HCT116 (cell line): ENCODE measurements at regions of chr1 and their contacts with region 1.

Region 1: DNA sequence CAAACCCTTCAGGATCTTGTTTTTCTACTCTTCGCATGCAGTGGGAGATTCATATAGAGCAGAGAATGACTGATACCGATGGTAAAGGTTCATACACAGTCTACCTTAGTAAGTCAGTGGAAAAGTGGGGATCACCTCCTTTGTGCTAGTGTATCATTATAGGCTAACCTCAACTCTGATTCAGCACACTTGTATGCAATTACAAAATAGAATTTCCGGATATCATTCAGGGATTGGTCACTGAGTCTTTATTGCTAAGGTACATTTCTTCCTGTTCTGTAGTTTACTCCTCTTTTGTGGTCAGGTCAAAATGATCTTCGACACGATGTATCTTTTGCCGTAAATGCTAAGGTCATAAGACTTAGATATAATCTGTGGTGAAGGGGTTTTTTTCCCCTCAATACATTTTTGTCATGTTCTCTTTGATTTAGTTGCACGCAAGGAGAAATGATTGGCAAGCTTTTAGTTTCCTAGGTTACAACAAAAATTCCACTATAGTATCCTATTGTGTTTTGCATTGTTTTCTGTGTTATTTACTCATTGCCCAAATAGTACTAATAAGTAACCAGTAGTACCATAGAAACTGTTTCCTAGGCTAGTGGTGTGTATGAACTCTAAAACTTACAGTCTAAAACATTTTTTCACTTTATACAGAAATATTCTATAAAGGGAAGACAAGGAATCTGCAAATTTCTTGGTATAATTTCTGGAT is 35.7 kb upstream of the PLA2G4A start:
- DNase-seq: no peak
- ATAC-seq: no peak
- H3K4me3 ChIP-seq: no peak overlapping the region
- H3K27ac ChIP-seq: no peak overlapping the region
- H3K4me1 ChIP-seq: no peaks in the 10 kb centered on the region
- H3K27me3 ChIP-seq: no peaks in the 10 kb centered on the region
- CTCF ChIP-seq: no peak
- POLR2A ChIP-seq: no peak
- RAD21 ChIP-seq: no peak

Region 2: DNA sequence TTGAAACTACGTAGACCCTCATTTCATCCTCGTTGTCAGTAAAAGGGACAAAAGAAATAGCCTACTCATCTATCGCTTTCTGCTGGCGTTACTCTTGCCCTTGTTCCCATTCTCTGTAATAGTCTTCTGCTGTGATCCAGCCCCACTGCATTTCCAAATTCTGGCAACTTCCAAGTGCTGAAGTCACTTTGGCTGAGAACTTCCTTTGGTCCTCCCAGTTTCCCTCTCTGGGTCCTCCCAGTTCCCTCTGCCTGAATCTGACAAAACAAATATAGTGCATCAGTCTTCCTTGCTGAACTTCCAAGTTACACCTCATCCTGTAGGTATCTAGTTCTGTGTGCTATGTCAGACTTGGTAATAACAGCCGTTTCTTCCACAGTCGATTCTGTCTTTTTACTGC is 11.3 kb before region 1 on chr1:
- CTCF ChIA-PET with region 1: no interaction called
- POLR2A ChIA-PET with region 1: no interaction called
- RAD21 ChIA-PET with region 1: no interaction called
- intact Hi-C with region 1: loop called (anchors 1 kb)
- DNase-seq: no peak
- ATAC-seq: no peak
- H3K4me3 ChIP-seq: no peak overlapping the region
- H3K27ac ChIP-seq: no peak overlapping the region
- H3K4me1 ChIP-seq: no peaks in the 10 kb centered on the region
- H3K27me3 ChIP-seq: no peaks in the 10 kb centered on the region
- CTCF ChIP-seq: no peak
- POLR2A ChIP-seq: no peak
- RAD21 ChIP-seq: no peak

Region 3: DNA sequence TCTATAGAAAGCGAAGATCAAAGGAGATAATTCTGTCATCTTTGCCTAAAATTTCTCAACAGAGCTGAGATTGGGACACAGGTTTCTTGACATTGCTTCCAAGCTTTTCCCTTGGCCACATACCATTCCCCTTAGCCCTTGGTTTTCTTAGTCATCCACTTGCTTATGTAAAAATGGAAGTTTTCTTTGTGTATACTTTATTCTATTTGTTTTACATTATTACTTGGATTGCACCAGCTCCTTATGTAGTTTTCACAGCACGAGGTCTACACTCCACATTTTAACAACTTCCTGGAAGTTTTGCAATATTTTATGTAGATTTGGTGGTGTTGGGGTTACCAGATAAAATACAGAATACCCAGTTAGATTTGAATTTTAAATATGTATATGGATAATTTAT is 165.5 kb after region 1 on chr1:
- CTCF ChIA-PET with region 1: no interaction called
- POLR2A ChIA-PET with region 1: no interaction called
- RAD21 ChIA-PET with region 1: no interaction called
- intact Hi-C with region 1: no loop called
- DNase-seq: no peak
- ATAC-seq: no peak
- H3K4me3 ChIP-seq: no peak overlapping the region
- H3K27ac ChIP-seq: no peak overlapping the region
- H3K4me1 ChIP-seq: no peaks in the 10 kb centered on the region
- H3K27me3 ChIP-seq: no peaks in the 10 kb centered on the region
- CTCF ChIP-seq: no peak
- POLR2A ChIP-seq: no peak
- RAD21 ChIP-seq: no peak